B cell (primary cell): ENCODE measurements at regions of chr16 and their contacts with region 1.

Region 1: DNA sequence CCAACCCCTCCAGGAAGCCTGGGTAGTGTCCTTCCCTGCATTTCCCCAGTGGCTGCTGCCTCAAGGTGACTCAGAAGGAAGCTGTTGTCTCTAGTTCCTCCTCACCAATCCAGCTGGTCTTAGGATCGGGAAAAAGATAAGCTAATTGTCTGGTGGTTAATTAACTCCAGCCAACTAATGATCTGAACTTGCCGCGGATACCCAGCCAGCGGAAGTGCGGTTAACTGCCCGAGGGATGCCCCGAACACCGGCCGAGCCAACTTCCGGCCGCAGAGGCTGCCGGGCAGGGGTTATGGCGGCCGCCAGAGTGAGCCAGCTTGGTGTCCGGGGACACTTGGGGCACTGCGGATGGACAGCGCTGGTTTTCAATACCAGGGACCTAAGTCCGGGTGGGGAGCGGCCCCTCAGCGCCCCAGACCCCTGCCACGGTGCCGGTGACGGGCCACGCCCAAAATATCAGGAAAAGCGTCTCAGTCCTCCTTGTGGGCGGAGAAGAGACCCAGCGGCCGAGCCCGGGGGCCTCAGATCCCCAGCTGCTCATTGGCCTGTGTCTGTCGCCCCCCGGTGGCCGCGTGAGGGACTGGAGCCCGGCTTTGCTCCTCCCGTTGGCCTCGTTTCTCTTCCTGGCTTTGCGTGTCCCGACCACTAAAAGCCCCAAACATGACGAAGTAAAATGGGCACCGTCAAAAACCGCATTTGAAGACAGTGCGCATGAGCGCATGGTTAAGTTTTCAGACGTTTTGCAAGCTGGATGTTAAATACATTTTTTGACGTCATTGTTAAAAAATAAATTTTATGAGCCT is 10.2 kb upstream of the PRSS22 start:
- DNase-seq: peak; percentile 94
- ATAC-seq: peak; percentile 95
- H3K4me3 ChIP-seq: peak overlapping the region; percentile 47 to 83 (median 71)
- H3K4me3 Mint-ChIP-seq: peak overlapping the region; percentile 94
- H3K27ac ChIP-seq: peak overlapping the region; percentile 78 to 85
- H3K27ac Mint-ChIP-seq: peak overlapping the region; percentile 92
- H3K4me1 ChIP-seq: peaks cover 0 to 10% of the 10 kb centered on the region in 2 donors
- H3K4me1 Mint-ChIP-seq: peaks cover 9% of the 10 kb centered on the region
- H3K27me3 ChIP-seq: peaks cover 0 to 3% (median 0%) of the 10 kb centered on the region in 4 experiments
- H3K27me3 Mint-ChIP-seq: peaks cover 17% of the 10 kb centered on the region
- CTCF ChIP-seq: peak; percentile 97

Region 2: GRCh38 chr16:1378804-1379303 is 1489.3 kb before region 1 on chr16:
- CTCF ChIA-PET with region 1: no interaction called
- POLR2A ChIA-PET with region 1: interaction called, 10 read pairs
- intact Hi-C with region 1: no loop called
- DNase-seq: peak; percentile 75
- ATAC-seq: peak; percentile 55
- H3K4me3 ChIP-seq: peak overlapping the region in 3 of 5 experiments; percentile 39 to 52 (median 51)
- H3K4me3 Mint-ChIP-seq: peak overlapping the region; percentile 77
- H3K27ac ChIP-seq: peak overlapping the region in 1 of 2 donors; percentile 33
- H3K27ac Mint-ChIP-seq: peak overlapping the region; percentile 16
- H3K4me1 ChIP-seq: peaks cover 10 to 14% of the 10 kb centered on the region in 2 donors
- H3K4me1 Mint-ChIP-seq: peaks cover 15% of the 10 kb centered on the region
- H3K27me3 ChIP-seq: no peaks in the 10 kb centered on the region
- H3K27me3 Mint-ChIP-seq: no peaks in the 10 kb centered on the region
- CTCF ChIP-seq: no peak

Region 3: DNA sequence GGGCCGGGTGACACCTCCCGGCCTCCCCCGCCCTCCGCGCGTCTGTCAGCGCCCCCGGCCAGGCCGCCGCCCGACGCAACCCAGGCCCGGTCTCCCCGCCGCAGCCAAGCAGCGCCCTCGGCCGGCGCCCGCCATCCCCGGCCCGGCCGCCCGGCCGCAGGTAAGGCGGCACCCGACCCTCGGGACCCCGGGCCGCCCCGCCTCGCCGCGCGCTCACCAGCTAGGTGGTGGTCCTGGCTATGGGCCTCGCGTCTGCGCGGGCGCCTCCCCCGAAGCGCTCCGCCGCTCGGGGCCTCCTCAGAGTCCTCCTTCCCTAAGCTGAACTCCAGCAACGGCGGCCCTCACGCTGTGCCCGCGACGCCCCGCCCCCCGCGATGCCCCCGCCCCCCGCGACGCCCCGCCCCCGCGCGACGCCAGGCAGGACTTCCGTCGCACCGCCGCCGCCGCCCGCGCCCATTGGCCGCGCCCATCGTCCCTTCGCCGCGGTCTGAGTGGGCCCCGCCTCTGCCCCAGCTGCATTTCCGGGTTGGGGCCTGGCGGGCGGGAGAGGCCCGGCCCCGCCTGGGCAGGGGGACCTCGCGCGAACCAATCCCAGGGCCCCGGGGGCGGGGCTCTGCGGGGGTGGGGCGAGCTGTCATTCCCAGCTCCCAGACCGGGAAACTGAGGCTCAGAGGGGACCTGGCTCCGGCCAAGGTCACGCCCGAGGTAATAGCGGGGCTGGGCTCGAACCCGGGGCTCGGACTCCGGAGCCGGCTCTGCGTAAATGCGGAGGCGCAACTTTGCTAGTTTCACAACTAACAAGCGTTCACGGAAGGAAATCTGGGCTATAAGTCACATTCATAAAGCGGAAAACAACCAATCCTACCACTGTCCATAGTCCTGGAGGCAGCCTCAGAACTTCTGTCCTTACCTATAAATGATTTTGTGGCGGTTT is 194.9 kb before region 1 on chr16:
- CTCF ChIA-PET with region 1: no interaction called
- POLR2A ChIA-PET with region 1: no interaction called
- intact Hi-C with region 1: loop called (anchors 5 kb)
- DNase-seq: peak; percentile 96
- ATAC-seq: peak; percentile 93
- H3K4me3 ChIP-seq: peak overlapping the region; percentile 70 to 87 (median 79)
- H3K4me3 Mint-ChIP-seq: peak overlapping the region; percentile 89
- H3K27ac ChIP-seq: peak overlapping the region; percentile 59 to 73
- H3K27ac Mint-ChIP-seq: peak overlapping the region; percentile 90
- H3K4me1 ChIP-seq: peaks cover 10 to 27% of the 10 kb centered on the region in 2 donors
- H3K4me1 Mint-ChIP-seq: peaks cover 26% of the 10 kb centered on the region
- H3K27me3 ChIP-seq: no peaks in the 10 kb centered on the region
- H3K27me3 Mint-ChIP-seq: no peaks in the 10 kb centered on the region
- CTCF ChIP-seq: no peak

Region 4: DNA sequence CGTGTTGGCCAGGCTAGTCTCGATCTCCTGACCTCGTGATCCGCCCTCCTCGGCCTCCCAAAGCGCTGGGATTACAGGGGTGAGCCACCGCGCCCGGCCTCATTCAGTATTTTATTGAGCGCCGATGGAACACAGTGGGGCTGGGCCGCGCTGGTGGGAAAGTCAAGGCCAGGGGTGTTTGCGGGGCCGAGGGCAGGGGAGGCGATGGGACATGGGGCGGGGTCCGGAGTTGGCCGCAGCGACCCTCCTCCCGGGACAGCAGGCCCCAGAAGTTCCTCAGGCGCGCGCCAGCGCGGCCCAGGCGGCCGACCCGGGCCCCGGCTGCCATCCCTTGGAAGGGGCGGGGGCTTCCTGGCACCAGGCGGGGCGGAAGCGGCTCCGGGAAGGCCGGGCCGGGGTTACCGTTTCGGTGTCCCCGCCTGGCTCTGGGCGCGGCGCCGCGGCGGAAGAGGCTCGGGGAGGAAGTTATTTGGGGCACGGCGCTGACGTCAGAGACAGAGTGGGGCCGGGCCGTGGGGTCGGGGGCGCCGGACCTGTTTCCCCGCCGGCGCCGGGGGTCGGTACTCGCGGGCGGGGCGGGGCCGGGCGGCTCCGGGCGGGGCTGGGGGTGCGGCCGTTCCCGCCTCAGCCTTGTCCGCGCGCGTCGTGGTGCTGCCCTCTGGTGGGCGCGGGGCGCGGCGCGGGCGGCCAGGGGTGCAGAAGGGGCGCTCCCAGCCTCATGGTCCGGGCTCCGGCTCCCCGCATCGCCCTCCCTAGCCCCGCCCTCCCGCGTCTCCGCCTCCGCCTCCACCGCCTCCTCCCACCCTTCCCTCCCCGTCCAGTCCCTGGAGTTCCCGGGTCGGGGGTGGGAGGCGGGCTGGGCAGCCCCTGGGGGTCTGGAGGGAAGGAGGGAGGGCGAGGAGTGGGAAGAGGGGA is 147.2 kb before region 1 on chr16:
- CTCF ChIA-PET with region 1: no interaction called
- POLR2A ChIA-PET with region 1: no interaction called
- intact Hi-C with region 1: loop called (anchors 1 kb)
- DNase-seq: peak; percentile 91
- ATAC-seq: peak; percentile 92
- H3K4me3 ChIP-seq: peak overlapping the region in 4 of 5 experiments; percentile 49 to 70 (median 65)
- H3K4me3 Mint-ChIP-seq: peak overlapping the region; percentile 83
- H3K27ac ChIP-seq: peak overlapping the region; percentile 12 to 67
- H3K27ac Mint-ChIP-seq: peak overlapping the region; percentile 82
- H3K4me1 ChIP-seq: peaks cover 3 to 13% of the 10 kb centered on the region in 2 donors
- H3K4me1 Mint-ChIP-seq: peaks cover 4% of the 10 kb centered on the region
- H3K27me3 ChIP-seq: peaks cover 0 to 9% (median 4%) of the 10 kb centered on the region in 4 experiments
- H3K27me3 Mint-ChIP-seq: peaks cover 12% of the 10 kb centered on the region
- CTCF ChIP-seq: peak; percentile 88

Region 5: DNA sequence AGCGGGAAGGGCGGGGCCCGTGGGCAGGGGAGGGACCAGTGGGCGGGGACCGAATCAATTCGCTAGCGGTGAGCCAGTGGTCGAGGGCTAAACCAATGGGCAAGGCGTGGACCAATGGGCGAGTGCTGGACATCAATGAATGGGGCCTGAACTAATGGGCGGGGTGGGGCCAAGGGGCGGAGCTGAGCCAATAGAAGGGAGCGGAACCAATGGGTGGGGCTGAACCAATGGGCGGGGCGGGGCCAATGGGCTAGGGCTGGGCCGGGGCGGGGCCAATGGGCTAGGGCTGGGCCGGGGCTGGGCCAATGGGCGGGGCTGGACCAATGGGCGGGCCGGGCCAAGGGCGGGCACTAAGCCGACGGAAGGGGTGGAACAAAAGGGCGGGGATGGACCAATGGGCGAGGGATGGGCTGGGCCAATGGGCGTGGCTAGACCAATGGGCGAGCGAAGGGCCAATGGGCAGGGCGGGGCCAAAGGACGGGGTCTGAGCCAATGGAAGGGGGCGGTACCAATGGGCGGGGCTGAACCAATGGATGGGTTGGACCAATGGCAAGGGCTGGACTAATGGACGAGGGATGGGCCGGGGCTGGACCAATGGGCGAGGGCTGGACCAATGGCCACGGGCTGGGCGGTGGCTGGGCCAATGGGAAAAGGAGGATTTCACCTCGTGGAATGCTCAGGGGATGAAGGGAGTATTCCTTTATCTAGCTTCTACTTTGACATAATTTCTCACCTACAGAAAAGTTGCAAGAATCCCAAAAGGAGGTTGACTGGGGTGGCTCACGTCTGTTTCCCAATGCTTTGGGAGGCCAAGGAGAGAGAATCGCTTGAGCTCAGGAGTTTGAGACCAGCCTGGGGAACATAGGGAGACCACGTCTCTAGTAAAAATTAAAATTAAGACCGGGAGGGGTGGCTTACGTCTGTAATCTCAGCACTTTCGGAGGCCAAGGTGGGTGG is 37.5 kb after region 1 on chr16:
- CTCF ChIA-PET with region 1: interaction called, 14 read pairs
- POLR2A ChIA-PET with region 1: interaction called, 5 read pairs
- intact Hi-C with region 1: loop called (anchors 1 kb)
- DNase-seq: peak; percentile 95
- ATAC-seq: peak; percentile 75
- H3K4me3 ChIP-seq: peak overlapping the region; percentile 21 to 85 (median 74)
- H3K4me3 Mint-ChIP-seq: peak overlapping the region; percentile 93
- H3K27ac ChIP-seq: peak overlapping the region in 1 of 2 donors; percentile 22
- H3K27ac Mint-ChIP-seq: peak overlapping the region; percentile 84
- H3K4me1 ChIP-seq: peaks cover 10 to 28% of the 10 kb centered on the region in 2 donors
- H3K4me1 Mint-ChIP-seq: peaks cover 33% of the 10 kb centered on the region
- H3K27me3 ChIP-seq: no peaks in the 10 kb centered on the region
- H3K27me3 Mint-ChIP-seq: no peaks in the 10 kb centered on the region
- CTCF ChIP-seq: no peak

Region 6: DNA sequence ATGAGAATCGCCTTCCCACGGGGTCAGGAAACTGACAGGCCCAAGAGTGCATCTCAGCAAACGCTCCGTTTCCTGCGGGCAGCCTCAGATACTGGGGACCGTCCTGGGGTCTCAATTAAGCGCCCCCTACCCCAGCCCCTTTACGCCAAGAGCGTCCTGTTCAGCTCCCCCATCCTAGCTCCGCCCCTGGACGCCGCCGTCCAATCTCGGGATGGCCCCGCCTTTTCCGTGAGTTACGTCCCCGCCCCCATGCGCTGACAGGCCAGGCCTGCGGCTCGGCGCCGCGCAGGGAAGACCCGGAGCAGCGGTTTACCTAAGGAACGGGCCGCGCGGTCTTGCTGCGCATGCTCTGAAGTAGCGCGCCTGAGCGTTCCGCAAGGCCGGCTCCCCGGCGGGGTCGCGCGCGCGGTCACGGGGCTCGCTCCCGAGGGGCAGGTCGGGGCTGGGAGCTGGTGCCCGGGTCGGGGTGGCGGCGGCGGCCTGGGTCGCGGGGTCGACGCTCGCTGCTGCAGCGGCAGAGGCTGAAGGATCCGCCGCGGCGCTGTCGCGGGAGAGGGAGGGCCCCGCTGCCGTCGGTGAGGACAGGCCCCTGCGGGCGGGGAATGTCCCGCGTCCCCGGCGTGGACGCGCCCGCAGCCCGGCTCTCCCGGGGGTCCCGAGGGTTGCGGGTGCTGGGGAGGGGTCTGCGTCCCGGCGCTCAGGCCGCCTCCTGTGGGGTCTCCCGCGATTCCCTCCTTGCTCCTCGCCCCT is 43.6 kb after region 1 on chr16 and contains the start of gene FLYWCH1:
- CTCF ChIA-PET with region 1: interaction called, 16 read pairs
- POLR2A ChIA-PET with region 1: no interaction called
- intact Hi-C with region 1: no loop called
- DNase-seq: peak; percentile 98
- ATAC-seq: peak; percentile 99
- H3K4me3 ChIP-seq: peak within 1 kb of the TSS; percentile 50 to 77 (median 70)
- H3K4me3 Mint-ChIP-seq: peak within 1 kb of the TSS; percentile 96
- H3K27ac ChIP-seq: peak within 1 kb of the TSS; percentile 38 to 66
- H3K27ac Mint-ChIP-seq: peak within 1 kb of the TSS; percentile 92
- H3K4me1 ChIP-seq: peaks cover 11 to 18% of the 10 kb centered on the region in 2 donors
- H3K4me1 Mint-ChIP-seq: peaks cover 29% of the 10 kb centered on the region
- H3K27me3 ChIP-seq: no peaks in the 10 kb centered on the region
- H3K27me3 Mint-ChIP-seq: no peaks in the 10 kb centered on the region
- CTCF ChIP-seq: no peak
- total RNA-seq, gene FLYWCH1: 119 and 120 TPM in 2 replicates

Region 7: GRCh38 chr16:2919511-2920255 is 51.5 kb after region 1 on chr16:
- CTCF ChIA-PET with region 1: interaction called, 15 read pairs
- POLR2A ChIA-PET with region 1: no interaction called
- intact Hi-C with region 1: no loop called
- DNase-seq: peak; percentile 80
- ATAC-seq: peak; percentile 69
- H3K4me3 ChIP-seq: no peak overlapping the region
- H3K4me3 Mint-ChIP-seq: no peak overlapping the region
- H3K27ac ChIP-seq: no peak overlapping the region
- H3K27ac Mint-ChIP-seq: no peak overlapping the region
- H3K4me1 ChIP-seq: peaks cover 0 to 3% of the 10 kb centered on the region in 2 donors
- H3K4me1 Mint-ChIP-seq: peaks cover 2% of the 10 kb centered on the region
- H3K27me3 ChIP-seq: no peaks in the 10 kb centered on the region
- H3K27me3 Mint-ChIP-seq: no peaks in the 10 kb centered on the region
- CTCF ChIP-seq: peak; percentile 96